Activated CD4-positive, alpha-beta T cell treated with anti-CD3 and anti-CD28 coated beads for 36 hours (primary cell): ENCODE measurements at regions of chr6 and their contacts with region 1.

Region 1: DNA sequence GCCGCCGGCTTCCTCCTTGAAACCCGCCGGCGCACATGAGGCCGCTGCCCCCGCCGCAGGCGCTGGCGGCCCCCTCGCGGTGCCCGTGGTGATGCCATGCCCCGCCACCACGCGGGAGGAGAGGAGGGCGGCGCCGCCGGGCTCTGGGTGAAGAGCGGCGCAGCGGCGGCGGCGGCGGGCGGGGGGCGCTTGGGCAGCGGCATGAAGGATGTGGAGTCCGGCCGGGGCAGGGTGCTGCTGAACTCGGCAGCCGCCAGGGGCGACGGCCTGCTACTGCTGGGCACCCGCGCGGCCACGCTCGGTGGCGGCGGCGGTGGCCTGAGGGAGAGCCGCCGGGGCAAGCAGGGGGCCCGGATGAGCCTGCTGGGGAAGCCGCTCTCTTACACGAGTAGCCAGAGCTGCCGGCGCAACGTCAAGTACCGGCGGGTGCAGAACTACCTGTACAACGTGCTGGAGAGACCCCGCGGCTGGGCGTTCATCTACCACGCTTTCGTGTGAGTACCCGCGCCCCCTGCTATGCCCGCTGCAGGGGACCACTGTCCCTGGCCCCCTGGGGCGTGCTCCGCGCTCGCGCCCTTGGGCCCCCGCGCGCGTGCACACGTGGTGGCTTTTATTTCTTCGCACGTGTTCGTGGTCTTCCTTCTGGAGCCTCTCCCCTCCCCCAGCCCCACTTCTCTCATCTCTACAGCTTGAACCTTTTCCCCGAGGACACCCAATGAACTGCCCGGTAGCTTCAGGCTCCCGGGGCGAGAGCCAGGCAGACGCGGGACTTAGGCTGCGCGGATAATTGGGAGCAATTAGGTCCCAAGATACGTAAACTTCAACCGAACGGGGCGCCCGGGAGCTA is 453 bp downstream of the KCNQ5 start:
- DNase-seq: peak; percentile 69
- ATAC-seq: peak; percentile 13
- H3K4me3 Mint-ChIP-seq: peak overlapping the region; percentile 81
- H3K27ac Mint-ChIP-seq: peak overlapping the region; percentile 90
- H3K4me1 Mint-ChIP-seq: peaks cover 58% of the 10 kb centered on the region
- H3K27me3 Mint-ChIP-seq: peaks cover 17% of the 10 kb centered on the region

Region 2: GRCh38 chr6:72411872-72412708 is 210.2 kb before region 1 on chr6:
- CTCF ChIA-PET with region 1: interaction called, 5 read pairs
- POLR2A ChIA-PET with region 1: no interaction called
- intact Hi-C with region 1: loop called (anchors 5 to 10 kb)
- DNase-seq: peak; percentile 80
- ATAC-seq: peak; percentile 90
- H3K4me3 Mint-ChIP-seq: no peak overlapping the region
- H3K27ac Mint-ChIP-seq: no peak overlapping the region
- H3K4me1 Mint-ChIP-seq: no peaks in the 10 kb centered on the region
- H3K27me3 Mint-ChIP-seq: peaks cover 5% of the 10 kb centered on the region

Region 3: DNA sequence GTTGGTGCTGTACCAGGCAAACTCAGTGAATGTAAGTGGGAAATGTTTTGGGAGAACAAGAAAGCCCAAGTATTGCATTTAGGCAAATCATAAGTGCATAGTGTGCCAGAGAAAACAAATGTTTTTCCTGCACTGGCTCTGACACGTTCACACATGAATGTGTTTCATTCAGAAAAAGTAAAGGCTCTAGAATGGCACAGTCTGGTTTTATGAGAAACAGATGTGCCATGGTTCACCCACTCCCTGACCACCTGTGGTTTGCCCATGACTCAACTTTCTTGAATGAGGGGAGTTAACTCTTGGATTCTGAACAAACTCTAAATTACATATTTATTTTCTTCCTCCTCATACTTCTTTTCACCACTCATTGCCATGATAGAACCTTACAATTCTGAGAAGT is 126.4 kb after region 1 on chr6:
- CTCF ChIA-PET with region 1: no interaction called
- POLR2A ChIA-PET with region 1: no interaction called
- intact Hi-C with region 1: loop called in 1 of 2 experiments (anchors 10 kb)
- DNase-seq: peak; percentile 40
- ATAC-seq: no peak
- H3K4me3 Mint-ChIP-seq: no peak overlapping the region
- H3K27ac Mint-ChIP-seq: no peak overlapping the region
- H3K4me1 Mint-ChIP-seq: no peaks in the 10 kb centered on the region
- H3K27me3 Mint-ChIP-seq: no peaks in the 10 kb centered on the region

Region 4: GRCh38 chr6:73262671-73263569 is 640.6 kb after region 1 on chr6 and contains the start of gene KHDC1:
- CTCF ChIA-PET with region 1: no interaction called
- POLR2A ChIA-PET with region 1: no interaction called
- intact Hi-C with region 1: loop called in 1 of 2 experiments (anchors 5 kb)
- DNase-seq: peak; percentile 74
- ATAC-seq: peak; percentile 89
- H3K4me3 Mint-ChIP-seq: peak within 1 kb of the TSS; percentile 89
- H3K27ac Mint-ChIP-seq: peak within 1 kb of the TSS; percentile 93
- H3K4me1 Mint-ChIP-seq: peaks cover 26% of the 10 kb centered on the region
- H3K27me3 Mint-ChIP-seq: no peaks in the 10 kb centered on the region
- total RNA-seq, gene KHDC1: 2.8 to 4.2 TPM

Region 5: DNA sequence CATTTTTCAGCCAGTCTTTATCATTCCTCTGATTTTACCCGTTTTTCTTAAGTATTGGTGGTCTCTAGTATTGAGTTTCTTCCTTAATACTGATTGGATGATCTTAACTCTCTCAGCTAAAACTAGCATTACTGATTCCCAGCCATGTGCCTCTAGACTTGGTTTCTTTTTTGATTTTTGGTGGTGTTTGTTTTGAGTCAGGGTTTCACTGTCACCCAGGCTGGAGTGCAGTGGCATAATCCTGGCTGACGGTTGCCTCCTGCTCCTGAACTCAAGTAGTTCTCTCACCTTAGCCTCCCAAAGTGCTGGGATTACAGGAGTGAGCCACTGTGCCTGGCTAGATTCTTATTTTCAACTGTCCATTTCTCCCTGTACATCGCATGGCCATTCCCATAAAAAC is 706.9 kb after region 1 on chr6:
- CTCF ChIA-PET with region 1: interaction called, 5 read pairs
- POLR2A ChIA-PET with region 1: no interaction called
- intact Hi-C with region 1: loop called in 1 of 2 experiments (anchors 5 kb)
- DNase-seq: peak; percentile 20
- ATAC-seq: peak; percentile 66
- H3K4me3 Mint-ChIP-seq: no peak overlapping the region
- H3K27ac Mint-ChIP-seq: no peak overlapping the region
- H3K4me1 Mint-ChIP-seq: no peaks in the 10 kb centered on the region
- H3K27me3 Mint-ChIP-seq: peaks cover 13% of the 10 kb centered on the region

Region 6: GRCh38 chr6:73461537-73462350 is 839.4 kb after region 1 on chr6 and contains the start of gene MTO1:
- CTCF ChIA-PET with region 1: no interaction called
- POLR2A ChIA-PET with region 1: no interaction called
- intact Hi-C with region 1: loop called in 1 of 2 experiments (anchors 5 kb)
- DNase-seq: peak; percentile 92
- ATAC-seq: peak; percentile 96
- H3K4me3 Mint-ChIP-seq: peak within 1 kb of the TSS; percentile 93
- H3K27ac Mint-ChIP-seq: peak within 1 kb of the TSS; percentile 100
- H3K4me1 Mint-ChIP-seq: peaks cover 37% of the 10 kb centered on the region
- H3K27me3 Mint-ChIP-seq: no peaks in the 10 kb centered on the region
- total RNA-seq, gene MTO1: 45.0 to 49.7 TPM